ENCODE measurements at regions of chr11 and their contacts with region 1.

Region 1: GRCh38 chr11:57031556-57031955 is 42.8 kb downstream of the OR5AK2 start:
- DNase-seq: no peak

Region 2: GRCh38 chr11:56977314-56977713 is 54.2 kb before region 1 on chr11:
- intact Hi-C with region 1: loop called (anchors 10 kb)
- DNase-seq: no peak